Activated CD8-positive, alpha-beta memory T cell treated with anti-CD3 and anti-CD28 coated beads, Interleukin-2, amount 10 ng/mL, durations not matched to agents 7 days and 5 days (primary cell): ENCODE measurements at regions of chr10 and their contacts with region 1.

Region 1: GRCh38 chr10:110354322-110354766 is 49.6 kb upstream of the SMNDC1 start:
- DNase-seq: peak; percentile 93
- ATAC-seq: peak; percentile 50
- H3K4me3 Mint-ChIP-seq: peak overlapping the region; percentile 57
- H3K27ac Mint-ChIP-seq: peak overlapping the region; percentile 99
- H3K4me1 Mint-ChIP-seq: peaks cover 62% of the 10 kb centered on the region
- H3K27me3 Mint-ChIP-seq: no peaks in the 10 kb centered on the region

Region 2: DNA sequence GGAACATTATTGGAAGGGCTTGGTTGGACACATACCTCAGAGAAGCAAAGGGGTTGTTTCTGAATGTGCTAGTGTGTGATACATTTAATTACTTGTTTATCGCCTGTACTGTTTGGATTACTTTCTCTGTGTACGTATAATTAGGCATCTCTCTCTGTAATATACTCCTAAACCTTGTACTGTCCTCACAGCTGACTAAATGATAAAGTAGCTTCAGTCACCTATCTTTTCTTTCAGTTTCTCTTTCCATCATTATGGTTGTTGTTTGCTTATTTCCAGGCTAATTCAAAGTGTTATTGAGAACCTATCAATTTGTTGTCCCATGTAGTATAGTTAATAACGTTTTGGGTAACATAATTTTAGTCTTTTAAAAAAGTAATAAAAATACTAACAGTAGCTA is 112.9 kb before region 1 on chr10:
- CTCF ChIA-PET with region 1: no interaction called
- DNase-seq: no peak
- ATAC-seq: peak; percentile 91
- H3K4me3 Mint-ChIP-seq: peak overlapping the region; percentile 31
- H3K27ac Mint-ChIP-seq: peak overlapping the region; percentile 26
- H3K4me1 Mint-ChIP-seq: peaks cover 21% of the 10 kb centered on the region
- H3K27me3 Mint-ChIP-seq: peaks cover 26% of the 10 kb centered on the region

Region 3: GRCh38 chr10:110304780-110305421 is 49.4 kb before region 1 on chr10 and contains the start of gene SMNDC1:
- CTCF ChIA-PET with region 1: interaction called, 14 read pairs
- DNase-seq: peak; percentile 98
- ATAC-seq: peak; percentile 92
- H3K4me3 Mint-ChIP-seq: peak within 1 kb of the TSS; percentile 97
- H3K27ac Mint-ChIP-seq: peak within 1 kb of the TSS; percentile 98
- H3K4me1 Mint-ChIP-seq: peaks cover 63% of the 10 kb centered on the region
- H3K27me3 Mint-ChIP-seq: no peaks in the 10 kb centered on the region
- total RNA-seq, gene SMNDC1: 40.9 to 43.5 TPM

Region 4: DNA sequence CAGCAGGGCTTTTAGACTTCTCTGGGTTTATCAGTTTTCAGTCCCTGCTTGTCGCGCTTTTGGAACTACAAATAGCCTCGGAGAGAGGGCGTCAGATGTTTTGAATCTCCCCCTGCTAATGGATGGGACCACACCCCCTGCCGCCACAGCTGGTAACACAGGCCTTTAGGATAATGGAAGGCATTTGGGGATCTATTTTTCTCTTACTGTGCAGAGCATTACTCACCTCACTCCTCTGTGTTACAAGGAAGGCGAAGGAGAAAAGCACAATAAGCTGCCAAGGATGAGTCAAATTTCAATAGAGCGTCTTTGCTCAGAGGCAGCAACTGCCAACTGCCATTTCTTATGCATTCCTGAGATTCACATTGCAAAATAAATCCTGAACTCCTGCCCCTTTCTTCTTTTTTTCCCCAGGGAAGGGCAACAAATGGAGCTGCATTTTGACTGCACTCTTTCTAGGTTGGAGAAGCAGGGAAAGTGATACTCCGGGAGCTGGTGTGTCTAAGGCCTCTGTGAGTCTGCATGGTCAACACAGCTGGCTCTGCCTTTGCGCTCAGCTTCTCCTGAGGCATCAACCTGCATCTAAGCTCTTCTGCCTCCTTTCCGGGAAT is 18.1 kb before region 1 on chr10:
- CTCF ChIA-PET with region 1: interaction called, 48 read pairs
- DNase-seq: no peak
- ATAC-seq: no peak
- H3K4me3 Mint-ChIP-seq: no peak overlapping the region
- H3K27ac Mint-ChIP-seq: peak overlapping the region; percentile 88
- H3K4me1 Mint-ChIP-seq: peaks cover 48% of the 10 kb centered on the region
- H3K27me3 Mint-ChIP-seq: no peaks in the 10 kb centered on the region

Region 5: GRCh38 chr10:110420401-110421193 is 66.3 kb after region 1 on chr10:
- CTCF ChIA-PET with region 1: interaction called, 55 read pairs
- DNase-seq: no peak
- ATAC-seq: peak; percentile 40
- H3K4me3 Mint-ChIP-seq: peak overlapping the region; percentile 1
- H3K27ac Mint-ChIP-seq: peak overlapping the region; percentile 85
- H3K4me1 Mint-ChIP-seq: peaks cover 81% of the 10 kb centered on the region
- H3K27me3 Mint-ChIP-seq: no peaks in the 10 kb centered on the region

Region 6: GRCh38 chr10:110512461-110513187 is 158.3 kb after region 1 on chr10:
- CTCF ChIA-PET with region 1: interaction called, 178 read pairs
- DNase-seq: no peak
- ATAC-seq: peak; percentile 41
- H3K4me3 Mint-ChIP-seq: no peak overlapping the region
- H3K27ac Mint-ChIP-seq: peak overlapping the region; percentile 38
- H3K4me1 Mint-ChIP-seq: peaks cover 50% of the 10 kb centered on the region
- H3K27me3 Mint-ChIP-seq: no peaks in the 10 kb centered on the region

Region 7: GRCh38 chr10:110567201-110568054 is 213.1 kb after region 1 on chr10 and contains the start of gene SMC3:
- CTCF ChIA-PET with region 1: interaction called, 11 read pairs
- DNase-seq: peak; percentile 94
- ATAC-seq: peak; percentile 84
- H3K4me3 Mint-ChIP-seq: peak within 1 kb of the TSS; percentile 94
- H3K27ac Mint-ChIP-seq: peak within 1 kb of the TSS; percentile 97
- H3K4me1 Mint-ChIP-seq: peaks cover 38% of the 10 kb centered on the region
- H3K27me3 Mint-ChIP-seq: peaks cover 16% of the 10 kb centered on the region
- total RNA-seq, gene SMC3: 81.3 to 86.8 TPM